ENCODE measurements at regions of chr1 and their contacts with region 1.

Region 1: DNA sequence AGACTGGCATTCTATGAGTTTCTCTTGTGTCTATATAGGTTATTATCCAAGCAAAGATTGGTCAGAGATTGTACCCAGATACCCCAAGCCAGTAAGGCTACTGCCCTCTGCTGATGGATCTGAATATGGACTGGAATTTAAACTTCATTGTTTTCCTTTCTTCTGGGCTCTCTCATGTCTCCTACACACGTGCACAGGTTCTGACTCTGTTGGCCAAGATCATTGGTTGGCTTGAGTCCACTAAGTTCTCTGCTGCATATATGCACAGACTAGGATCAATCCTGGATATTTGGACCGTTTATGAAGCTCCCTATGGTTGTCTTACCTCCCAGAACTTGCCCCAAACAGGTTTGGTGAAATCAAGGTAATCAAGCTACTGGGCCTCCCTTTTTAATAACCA is 69.7 kb downstream of the CC2D1B start:
- DNase-seq: peak; percentile 66
- ATAC-seq: peak; percentile 86
- H3K4me3 ChIP-seq: no peak overlapping the region
- H3K27ac ChIP-seq: no peak overlapping the region
- H3K4me1 ChIP-seq: peaks cover 10% of the 10 kb centered on the region
- H3K27me3 ChIP-seq: no peaks in the 10 kb centered on the region; a peak in 1 of 5 replicates
- CTCF ChIP-seq: peak; percentile 83
- EP300 ChIP-seq: no peak
- POLR2A ChIP-seq: no peak
- RAD21 ChIP-seq: peak; percentile 69; the same call in 1 of the 2 replicates

Region 2: DNA sequence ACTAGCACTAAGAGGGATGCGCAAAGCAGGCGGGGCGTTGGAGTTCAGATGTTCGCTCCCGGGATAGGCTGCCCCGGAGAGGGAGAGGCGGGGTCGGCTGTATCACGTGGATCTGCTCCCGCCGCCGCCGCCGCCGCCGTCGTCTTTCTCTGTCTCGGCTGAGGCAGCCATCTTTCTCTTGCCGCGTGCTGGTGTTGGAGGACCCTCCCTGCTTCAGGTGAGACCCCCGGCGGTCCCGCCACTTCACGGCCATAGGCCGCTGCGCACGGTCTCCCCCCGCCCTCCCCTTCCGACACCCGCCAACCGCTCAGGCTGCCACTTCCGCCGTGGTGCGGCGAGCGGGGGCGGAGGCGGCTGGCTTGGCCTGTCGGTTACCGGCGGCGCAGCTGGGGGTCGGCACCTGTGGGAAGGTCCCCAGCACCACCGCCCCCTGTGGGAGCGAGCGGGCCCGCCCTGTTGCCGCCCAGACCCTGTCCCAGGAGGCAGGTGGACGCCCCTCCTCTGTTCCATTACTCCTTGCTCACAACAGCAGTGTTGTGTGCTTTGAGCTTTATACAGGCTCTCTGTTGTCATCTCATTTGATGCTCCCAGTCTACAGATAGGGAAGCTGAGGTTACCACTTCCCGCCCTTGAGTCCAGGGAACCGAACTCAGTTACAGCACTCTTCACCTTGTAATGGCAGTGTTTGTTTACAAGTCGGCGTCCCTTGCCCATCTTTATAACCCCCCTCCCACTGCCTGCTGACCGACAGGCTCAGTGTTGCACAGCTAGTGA is 240.0 kb before region 1 on chr1 and contains the start of gene BTF3L4:
- CTCF ChIA-PET with region 1: no interaction called
- POLR2A ChIA-PET with region 1: no interaction called
- in situ Hi-C with region 1: no loop called
- intact Hi-C with region 1: no loop called
- DNase-seq: peak; percentile 91
- ATAC-seq: peak; percentile 94
- H3K4me3 ChIP-seq: peak within 1 kb of the TSS; percentile 85 to 89 (median 87)
- H3K27ac ChIP-seq: peak within 1 kb of the TSS; percentile 91
- H3K4me1 ChIP-seq: peaks cover 51% of the 10 kb centered on the region
- H3K27me3 ChIP-seq: no peaks in the 10 kb centered on the region; a peak in 1 of 5 replicates
- CTCF ChIP-seq: no peak
- EP300 ChIP-seq: no peak
- POLR2A ChIP-seq: peak; percentile 66 to 70
- RAD21 ChIP-seq: no peak; the same call in 1 of the 2 replicates
- total RNA-seq, gene BTF3L4: 74.3 and 112 TPM in 2 replicates

Region 3: DNA sequence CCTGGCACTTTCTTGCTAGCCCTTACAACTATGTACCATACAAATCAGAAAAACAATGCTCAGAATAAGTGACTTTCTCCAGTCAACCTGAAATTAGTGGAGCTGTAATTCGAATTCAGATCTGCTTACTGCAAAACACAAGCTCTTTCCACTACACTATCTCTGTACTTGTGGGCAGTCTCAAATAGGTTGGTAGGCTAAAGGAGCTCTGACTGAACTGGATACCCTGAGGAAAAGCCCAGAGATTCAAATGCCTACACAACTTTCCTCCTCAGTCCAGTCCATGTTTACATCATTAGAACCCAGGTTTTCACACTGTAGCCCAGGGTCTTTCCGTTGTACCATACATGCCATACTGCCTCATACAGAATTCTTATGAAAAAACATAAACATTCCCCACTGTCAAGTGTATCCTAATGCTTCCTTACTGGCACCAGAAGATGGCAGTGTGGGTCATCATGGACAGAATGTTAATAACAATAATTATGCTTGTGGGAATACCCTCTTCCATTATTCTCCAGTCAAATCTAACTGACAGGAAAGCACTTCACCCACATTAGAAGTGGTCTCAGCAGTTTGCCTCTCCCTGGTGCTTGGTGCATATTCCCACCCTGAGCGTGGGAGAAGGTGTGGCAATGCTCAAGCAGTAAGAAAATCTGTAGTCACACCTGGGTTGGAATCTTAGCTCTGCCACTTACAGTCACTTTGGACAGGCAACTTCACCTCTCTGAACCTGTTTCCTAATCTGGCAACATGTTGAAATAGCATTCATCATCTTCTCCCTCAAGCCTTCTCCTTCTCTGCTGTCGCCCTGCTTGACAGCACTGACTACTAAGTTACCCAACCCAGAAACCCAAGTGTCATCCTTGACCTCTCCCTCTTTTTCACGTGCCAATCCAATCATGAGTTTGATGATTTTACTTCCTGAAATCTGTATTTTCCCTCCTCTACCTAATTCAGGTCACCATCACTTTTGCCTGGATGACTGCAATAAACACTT is 168.9 kb before region 1 on chr1:
- CTCF ChIA-PET with region 1: interaction called, 18 read pairs
- POLR2A ChIA-PET with region 1: no interaction called
- in situ Hi-C with region 1: no loop called
- intact Hi-C with region 1: loop called (anchors 1 kb)
- DNase-seq: peak; percentile 62
- ATAC-seq: peak; percentile 94
- H3K4me3 ChIP-seq: no peak overlapping the region
- H3K27ac ChIP-seq: no peak overlapping the region
- H3K4me1 ChIP-seq: peaks cover 16% of the 10 kb centered on the region
- H3K27me3 ChIP-seq: no peaks in the 10 kb centered on the region
- CTCF ChIP-seq: peak; percentile 79
- EP300 ChIP-seq: no peak
- POLR2A ChIP-seq: no peak
- RAD21 ChIP-seq: peak; percentile 68